ENCODE measurements at regions of chr19 and their contacts with region 1.

Region 1: DNA sequence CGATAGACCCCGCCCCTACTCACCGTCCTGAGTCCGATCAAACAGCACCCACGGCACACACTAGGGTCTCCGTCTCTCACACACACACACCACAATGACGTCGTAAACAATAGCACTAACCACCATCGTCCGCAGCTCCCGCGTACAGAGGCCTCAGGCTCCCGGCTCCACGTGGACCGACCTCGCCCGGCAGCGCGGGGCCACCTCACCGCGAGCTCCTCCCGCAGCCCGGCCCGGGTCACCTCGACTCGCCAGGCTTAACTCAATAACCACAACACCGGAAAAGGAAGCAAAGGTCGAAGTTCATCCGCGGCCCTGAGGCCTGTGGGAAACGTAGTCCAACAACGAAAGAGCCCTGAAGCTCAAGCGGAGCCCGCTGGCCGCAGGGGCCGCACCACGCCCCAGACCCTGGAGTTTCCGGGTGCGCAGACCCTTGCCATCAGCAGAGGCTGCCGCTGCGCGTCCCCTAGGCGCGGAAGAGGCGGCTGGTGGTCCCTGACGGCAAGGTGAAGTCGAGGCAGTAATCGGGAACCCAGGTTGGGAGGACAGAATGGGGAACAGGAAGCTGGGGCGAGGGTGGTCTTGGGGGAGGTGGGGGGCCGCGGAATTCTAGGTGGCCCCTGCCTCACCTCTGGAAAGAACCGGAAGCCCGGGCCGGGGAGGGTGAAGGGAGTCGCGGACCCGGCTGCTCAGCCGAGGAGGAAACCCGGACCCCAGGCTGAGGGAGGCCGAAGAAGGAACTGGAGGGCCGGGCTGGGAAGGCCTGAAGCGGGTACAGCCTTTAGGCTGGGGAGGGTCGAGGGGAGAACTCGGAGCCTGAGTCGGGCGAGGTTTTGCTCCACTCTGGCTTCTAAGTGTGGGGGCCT is at the start of gene ZNF529:
- DNase-seq: peak; percentile 75 to 98 (median 85)
- ATAC-seq: peak; percentile 93
- H3K4me3 ChIP-seq: peak within 1 kb of the TSS; percentile 87 to 99
- H3K4me3 Mint-ChIP-seq: peak within 1 kb of the TSS; percentile 87
- H3K27ac ChIP-seq: peak within 1 kb of the TSS; percentile 96 to 98
- H3K27ac Mint-ChIP-seq: peak within 1 kb of the TSS; percentile 99
- H3K4me1 ChIP-seq: peaks cover 19% of the 10 kb centered on the region
- H3K4me1 Mint-ChIP-seq: peaks cover 45% of the 10 kb centered on the region
- H3K27me3 ChIP-seq: no peaks in the 10 kb centered on the region
- H3K27me3 Mint-ChIP-seq: no peaks in the 10 kb centered on the region
- CTCF ChIP-seq: no peak
- total RNA-seq, gene ZNF529: 44.0 to 46.4 TPM

Region 2: DNA sequence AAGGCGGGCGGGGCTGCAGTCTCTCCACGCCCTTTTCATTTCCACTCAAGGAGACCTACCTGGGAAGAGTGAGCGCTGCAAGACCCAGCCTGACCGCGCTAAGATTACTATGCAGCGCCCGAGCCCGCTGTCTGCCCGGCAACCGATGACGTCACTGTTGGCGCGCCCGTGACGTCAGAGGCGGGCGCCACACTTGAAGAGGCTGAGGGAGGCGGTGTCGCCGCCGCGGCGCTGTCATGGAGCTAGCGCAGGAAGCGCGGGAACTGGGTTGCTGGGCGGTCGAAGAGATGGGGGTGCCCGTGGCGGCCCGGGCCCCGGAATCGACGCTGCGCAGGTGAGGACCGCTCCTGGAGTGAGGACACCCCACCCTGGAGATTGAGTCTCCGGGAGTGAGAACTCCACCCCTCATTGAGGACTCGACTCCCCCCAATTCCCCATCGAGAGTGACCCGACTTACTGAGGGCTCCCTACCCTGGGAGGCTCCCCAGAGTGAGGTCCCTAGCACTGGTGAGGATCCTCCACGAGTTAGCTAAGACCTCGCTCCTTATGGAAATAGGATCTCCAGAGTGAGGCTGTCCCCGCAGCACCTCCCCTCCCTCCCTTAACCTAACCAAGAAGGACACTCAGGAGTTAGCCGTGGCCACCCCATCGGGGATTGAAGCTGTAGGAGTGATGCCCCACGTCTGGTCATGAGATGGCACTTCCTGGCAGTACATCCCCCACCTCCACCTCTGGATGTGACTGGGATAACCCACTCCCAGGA is 960.5 kb before region 1 on chr19 and contains the start of gene HAUS5:
- CTCF ChIA-PET with region 1: no interaction called
- POLR2A ChIA-PET with region 1: no interaction called
- intact Hi-C with region 1: no loop called
- DNase-seq: peak; percentile 90 to 99 (median 96)
- ATAC-seq: peak; percentile 91
- H3K4me3 ChIP-seq: peak within 1 kb of the TSS; percentile 87 to 91
- H3K4me3 Mint-ChIP-seq: peak within 1 kb of the TSS; percentile 86
- H3K27ac ChIP-seq: peak within 1 kb of the TSS; percentile 78 to 81
- H3K27ac Mint-ChIP-seq: peak within 1 kb of the TSS; percentile 94
- H3K4me1 ChIP-seq: peaks cover 26% of the 10 kb centered on the region
- H3K4me1 Mint-ChIP-seq: peaks cover 35% of the 10 kb centered on the region
- H3K27me3 ChIP-seq: no peaks in the 10 kb centered on the region
- H3K27me3 Mint-ChIP-seq: no peaks in the 10 kb centered on the region
- CTCF ChIP-seq: no peak
- total RNA-seq, gene HAUS5: 24.0 to 27.7 TPM

Region 3: GRCh38 chr19:36363845-36364244 is 209.4 kb before region 1 on chr19:
- CTCF ChIA-PET with region 1: no interaction called
- POLR2A ChIA-PET with region 1: no interaction called
- intact Hi-C with region 1: no loop called
- DNase-seq: no peak
- ATAC-seq: no peak
- H3K4me3 ChIP-seq: no peak overlapping the region
- H3K4me3 Mint-ChIP-seq: no peak overlapping the region
- H3K27ac ChIP-seq: no peak overlapping the region
- H3K27ac Mint-ChIP-seq: no peak overlapping the region
- H3K4me1 ChIP-seq: no peaks in the 10 kb centered on the region
- H3K4me1 Mint-ChIP-seq: peaks cover 2% of the 10 kb centered on the region
- H3K27me3 ChIP-seq: no peaks in the 10 kb centered on the region
- H3K27me3 Mint-ChIP-seq: no peaks in the 10 kb centered on the region
- CTCF ChIP-seq: no peak

Region 4: DNA sequence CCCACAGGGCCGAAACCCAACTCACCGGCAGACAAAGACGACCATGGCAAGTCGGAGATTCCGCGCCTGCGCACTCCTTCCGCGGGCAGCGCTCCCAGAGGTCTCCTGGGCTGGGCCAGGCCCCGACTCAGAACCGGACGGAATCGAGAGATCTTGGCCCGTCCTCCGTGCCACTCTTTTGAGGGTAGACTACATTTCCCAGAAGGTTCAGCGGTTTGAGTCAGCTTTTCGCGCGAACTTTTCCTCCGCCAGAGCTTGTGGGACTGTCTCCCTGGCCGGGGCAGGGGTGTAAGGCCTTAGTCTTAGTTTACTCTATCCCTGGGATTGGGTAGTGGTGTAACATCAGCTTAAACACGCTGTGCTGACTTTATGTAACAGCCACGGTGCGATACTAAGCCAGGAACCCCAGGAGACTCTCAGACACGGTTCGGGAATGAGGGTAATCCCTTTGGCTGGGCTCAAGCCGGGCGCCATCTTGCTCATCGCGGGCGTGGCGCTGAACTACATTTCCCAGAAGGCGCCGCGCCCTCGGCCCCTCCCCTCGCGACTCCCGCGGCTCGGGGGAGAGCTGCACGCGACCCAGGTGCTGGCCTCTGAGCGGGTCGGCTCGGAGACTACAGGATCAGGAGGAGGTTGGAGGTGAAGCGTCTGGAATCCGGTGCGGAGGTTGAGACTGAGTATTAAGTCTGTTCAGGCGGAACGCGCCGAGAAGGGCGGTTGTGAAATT is 44.9 kb before region 1 on chr19 and contains the start of gene ZNF260:
- CTCF ChIA-PET with region 1: no interaction called
- POLR2A ChIA-PET with region 1: interaction called, 7 read pairs
- intact Hi-C with region 1: loop called (anchors 1 kb)
- DNase-seq: peak; percentile 77 to 96 (median 92)
- ATAC-seq: peak; percentile 90
- H3K4me3 ChIP-seq: peak within 1 kb of the TSS; percentile 64 to 85
- H3K4me3 Mint-ChIP-seq: peak within 1 kb of the TSS; percentile 99
- H3K27ac ChIP-seq: peak within 1 kb of the TSS; percentile 52 to 84
- H3K27ac Mint-ChIP-seq: peak within 1 kb of the TSS; percentile 96
- H3K4me1 ChIP-seq: peaks cover 21% of the 10 kb centered on the region
- H3K4me1 Mint-ChIP-seq: peaks cover 28% of the 10 kb centered on the region
- H3K27me3 ChIP-seq: no peaks in the 10 kb centered on the region
- H3K27me3 Mint-ChIP-seq: no peaks in the 10 kb centered on the region
- CTCF ChIP-seq: no peak
- total RNA-seq, gene ZNF260: 2.8 to 4.6 TPM

Region 5: DNA sequence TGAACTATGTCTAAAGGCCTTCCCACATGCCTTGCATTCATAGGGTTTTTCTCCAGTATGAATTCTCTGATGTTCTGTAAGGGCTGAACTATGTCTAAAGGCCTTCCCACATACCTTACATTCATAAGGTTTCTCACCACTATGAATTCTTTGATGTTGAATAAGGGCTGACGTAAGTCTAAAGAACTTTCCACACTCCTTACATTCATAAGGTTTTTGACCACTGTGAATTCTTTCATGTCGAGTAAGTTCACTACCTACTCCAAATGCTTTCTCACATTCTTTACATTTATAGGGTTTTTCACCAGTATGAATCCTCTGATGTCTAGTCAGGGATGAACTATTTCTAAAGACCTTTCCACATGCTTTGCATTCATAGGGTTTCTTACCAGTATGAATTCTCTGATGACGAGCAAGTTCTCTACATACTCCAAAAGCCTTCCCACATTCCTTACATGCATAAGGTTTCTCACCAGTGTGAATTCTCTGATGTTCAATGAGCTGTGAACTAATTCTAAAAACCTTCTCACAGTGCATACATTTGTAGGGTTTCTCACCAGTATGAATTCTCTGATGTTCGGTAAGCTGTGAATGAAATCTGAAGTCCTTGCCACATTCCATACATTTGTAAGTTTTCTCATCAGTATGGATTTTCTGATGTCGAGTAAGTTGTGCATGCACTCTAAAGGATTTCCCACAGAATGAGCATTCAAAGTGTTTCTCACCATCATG is 26.1 kb before region 1 on chr19:
- CTCF ChIA-PET with region 1: no interaction called
- POLR2A ChIA-PET with region 1: no interaction called
- intact Hi-C with region 1: no loop called
- DNase-seq: peak in 1 of 9 experiments; percentile 7
- ATAC-seq: no peak
- H3K4me3 ChIP-seq: peak overlapping the region in 1 of 2 experiments; percentile 26
- H3K4me3 Mint-ChIP-seq: no peak overlapping the region
- H3K27ac ChIP-seq: no peak overlapping the region
- H3K27ac Mint-ChIP-seq: no peak overlapping the region
- H3K4me1 ChIP-seq: no peaks in the 10 kb centered on the region
- H3K4me1 Mint-ChIP-seq: no peaks in the 10 kb centered on the region
- H3K27me3 ChIP-seq: no peaks in the 10 kb centered on the region
- H3K27me3 Mint-ChIP-seq: no peaks in the 10 kb centered on the region
- CTCF ChIP-seq: no peak

Region 6: GRCh38 chr19:36605101-36605876 is 32.0 kb after region 1 on chr19 and contains the start of gene ZNF382:
- CTCF ChIA-PET with region 1: interaction called, 3 read pairs
- POLR2A ChIA-PET with region 1: interaction called, 9 read pairs
- intact Hi-C with region 1: loop called (anchors 1 kb)
- DNase-seq: peak; percentile 72 to 91 (median 86)
- ATAC-seq: peak; percentile 65
- H3K4me3 ChIP-seq: peak within 1 kb of the TSS; percentile 89 to 95
- H3K4me3 Mint-ChIP-seq: peak within 1 kb of the TSS; percentile 91
- H3K27ac ChIP-seq: peak within 1 kb of the TSS; percentile 89 to 98
- H3K27ac Mint-ChIP-seq: peak within 1 kb of the TSS; percentile 97
- H3K4me1 ChIP-seq: peaks cover 11% of the 10 kb centered on the region
- H3K4me1 Mint-ChIP-seq: peaks cover 29% of the 10 kb centered on the region
- H3K27me3 ChIP-seq: no peaks in the 10 kb centered on the region
- H3K27me3 Mint-ChIP-seq: no peaks in the 10 kb centered on the region
- CTCF ChIP-seq: no peak
- total RNA-seq, gene ZNF382: 4.6 to 4.7 TPM

Region 7: GRCh38 chr19:36796076-36796992 is 223.1 kb after region 1 on chr19:
- CTCF ChIA-PET with region 1: no interaction called
- POLR2A ChIA-PET with region 1: no interaction called
- intact Hi-C with region 1: loop called in 1 of 2 experiments (anchors 1 kb)
- DNase-seq: no peak
- ATAC-seq: no peak
- H3K4me3 ChIP-seq: peak overlapping the region; percentile 92 to 97
- H3K4me3 Mint-ChIP-seq: peak overlapping the region; percentile 97
- H3K27ac ChIP-seq: peak overlapping the region; percentile 76 to 90
- H3K27ac Mint-ChIP-seq: peak overlapping the region; percentile 98
- H3K4me1 ChIP-seq: peaks cover 3% of the 10 kb centered on the region
- H3K4me1 Mint-ChIP-seq: peaks cover 21% of the 10 kb centered on the region
- H3K27me3 ChIP-seq: no peaks in the 10 kb centered on the region
- H3K27me3 Mint-ChIP-seq: peaks cover 6% of the 10 kb centered on the region
- CTCF ChIP-seq: no peak

Region 8: GRCh38 chr19:37309834-37310575 is 736.8 kb after region 1 on chr19:
- CTCF ChIA-PET with region 1: no interaction called
- POLR2A ChIA-PET with region 1: no interaction called
- intact Hi-C with region 1: loop called in 1 of 2 experiments (anchors 10 kb)
- DNase-seq: peak in 4 of 9 experiments; percentile 27 to 64 (median 45)
- ATAC-seq: no peak
- H3K4me3 ChIP-seq: no peak overlapping the region
- H3K4me3 Mint-ChIP-seq: no peak overlapping the region
- H3K27ac ChIP-seq: no peak overlapping the region
- H3K27ac Mint-ChIP-seq: no peak overlapping the region
- H3K4me1 ChIP-seq: no peaks in the 10 kb centered on the region
- H3K4me1 Mint-ChIP-seq: peaks cover 16% of the 10 kb centered on the region
- H3K27me3 ChIP-seq: no peaks in the 10 kb centered on the region
- H3K27me3 Mint-ChIP-seq: peaks cover 4% of the 10 kb centered on the region
- CTCF ChIP-seq: peak; percentile 53

Measured in CD8-positive, alpha-beta T cell (primary cell).